Naive thymus-derived CD4-positive, alpha-beta T cell (primary cell): ENCODE measurements at regions of chr1 and their contacts with region 1.

Region 1: GRCh38 chr1:167442124-167442848 is 76.0 kb downstream of the CD247 start:
- DNase-seq: peak; percentile 79 to 89 (median 87)
- ATAC-seq: peak; percentile 90
- H3K4me3 ChIP-seq: no peak overlapping the region
- H3K4me3 Mint-ChIP-seq: peak overlapping the region; percentile 17 to 75 (median 52)
- H3K27ac ChIP-seq: peak overlapping the region; percentile 57
- H3K27ac Mint-ChIP-seq: peak overlapping the region; percentile 71 to 96 (median 92)
- H3K4me1 ChIP-seq: peaks cover 59 to 85% of the 10 kb centered on the region in 2 donors
- H3K4me1 Mint-ChIP-seq: peaks cover 51 to 99% (median 88%) of the 10 kb centered on the region in 7 donors
- H3K27me3 ChIP-seq: no peaks in the 10 kb centered on the region
- H3K27me3 Mint-ChIP-seq: no peaks in the 10 kb centered on the region

Region 2: DNA sequence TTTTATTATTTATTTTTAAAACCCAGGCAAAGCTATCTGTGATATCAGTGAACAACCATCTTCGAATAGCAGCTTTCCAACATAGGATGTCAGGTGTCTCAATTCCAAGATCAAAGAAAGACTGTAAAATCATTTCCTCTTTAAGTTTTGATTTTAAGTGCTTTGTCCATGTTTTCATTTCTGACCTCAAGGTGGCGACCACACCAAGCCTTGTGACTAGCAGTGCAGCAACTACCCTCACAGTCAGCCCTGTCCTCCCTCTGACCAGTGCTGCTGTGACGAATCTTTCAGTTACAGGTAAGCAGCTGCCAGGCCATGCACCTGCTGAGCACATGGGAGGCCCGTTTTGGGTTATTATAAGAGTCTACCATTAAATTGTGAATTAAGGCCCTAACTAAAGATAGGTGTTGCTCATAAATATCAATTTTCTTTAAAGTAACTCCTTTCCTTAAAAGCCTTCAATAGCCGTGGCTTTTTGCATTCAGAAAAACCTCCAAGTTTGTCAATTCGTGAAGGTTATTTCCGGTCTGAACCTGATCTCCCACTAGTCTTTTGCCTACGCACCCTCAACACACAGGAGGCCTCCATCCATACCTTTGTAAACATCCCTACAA is 40.9 kb before region 1 on chr1:
- CTCF ChIA-PET with region 1: interaction called, 6 read pairs
- POLR2A ChIA-PET with region 1: interaction called, 3 read pairs
- intact Hi-C with region 1: loop called (anchors 1 kb)
- DNase-seq: peak in 8 of 9 donors; percentile 28 to 55 (median 40)
- ATAC-seq: peak; percentile 75
- H3K4me3 ChIP-seq: no peak overlapping the region
- H3K4me3 Mint-ChIP-seq: no peak overlapping the region
- H3K27ac ChIP-seq: no peak overlapping the region
- H3K27ac Mint-ChIP-seq: peak overlapping the region in 2 of 9 donors; percentile 23 to 69
- H3K4me1 ChIP-seq: no peaks in the 10 kb centered on the region
- H3K4me1 Mint-ChIP-seq: peaks cover 0 to 13% (median 9%) of the 10 kb centered on the region in 7 donors
- H3K27me3 ChIP-seq: no peaks in the 10 kb centered on the region
- H3K27me3 Mint-ChIP-seq: no peaks in the 10 kb centered on the region

Region 3: DNA sequence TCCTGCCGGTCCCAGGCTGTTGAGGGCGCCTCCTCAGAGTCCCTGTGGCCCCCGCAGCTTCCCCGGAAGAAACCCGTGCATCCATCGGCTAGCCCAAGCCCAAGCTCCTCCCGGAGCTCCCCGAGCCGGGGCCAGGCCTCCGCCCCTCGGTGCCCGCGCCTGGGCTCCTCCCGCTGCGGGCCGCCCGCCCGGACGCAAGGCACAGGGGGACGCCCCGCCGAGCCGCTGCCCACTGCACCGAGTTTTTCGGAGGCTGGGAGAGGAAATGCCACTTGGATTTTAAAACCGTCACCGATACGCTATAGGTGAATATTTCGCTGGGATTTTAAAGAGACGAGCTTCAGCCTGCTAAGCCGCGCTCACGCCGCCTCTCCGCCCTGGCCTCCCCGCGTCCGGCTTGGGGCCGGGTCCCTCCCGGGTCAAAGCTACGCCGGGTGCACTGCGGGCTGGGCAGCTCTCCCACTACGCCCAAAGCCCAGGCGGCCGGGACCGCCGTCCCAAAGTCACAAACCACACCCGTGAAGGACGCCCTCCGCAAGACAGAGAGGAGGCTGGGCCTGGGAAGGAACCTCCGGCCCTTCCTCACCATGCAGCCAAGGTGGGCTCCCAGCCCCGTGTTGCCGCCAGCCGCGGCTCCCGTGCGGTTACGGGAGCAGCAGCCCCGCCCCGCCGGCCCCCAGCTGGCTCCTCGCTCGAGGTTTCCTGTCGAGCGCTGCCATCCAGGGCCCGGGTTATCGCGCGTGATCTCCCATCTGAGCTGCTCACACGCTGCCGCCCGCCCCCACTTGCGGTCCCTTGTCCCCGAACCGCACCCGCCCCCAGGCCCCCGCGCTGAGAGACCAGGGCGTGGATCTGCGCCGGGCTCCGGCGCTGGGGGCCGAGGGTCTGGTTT is 12.9 kb after region 1 on chr1:
- CTCF ChIA-PET with region 1: interaction called, 12 read pairs
- POLR2A ChIA-PET with region 1: interaction called, 51 read pairs
- intact Hi-C with region 1: loop called (anchors 1 kb)
- DNase-seq: peak; percentile 64 to 87 (median 83)
- ATAC-seq: peak; percentile 74
- H3K4me3 ChIP-seq: peak overlapping the region; percentile 91
- H3K4me3 Mint-ChIP-seq: peak overlapping the region; percentile 80 to 91 (median 87)
- H3K27ac ChIP-seq: peak overlapping the region; percentile 100
- H3K27ac Mint-ChIP-seq: peak overlapping the region; percentile 41 to 98 (median 93)
- H3K4me1 ChIP-seq: peaks cover 34 to 70% of the 10 kb centered on the region in 2 donors
- H3K4me1 Mint-ChIP-seq: peaks cover 37 to 86% (median 72%) of the 10 kb centered on the region in 7 donors
- H3K27me3 ChIP-seq: no peaks in the 10 kb centered on the region
- H3K27me3 Mint-ChIP-seq: no peaks in the 10 kb centered on the region

Region 4: DNA sequence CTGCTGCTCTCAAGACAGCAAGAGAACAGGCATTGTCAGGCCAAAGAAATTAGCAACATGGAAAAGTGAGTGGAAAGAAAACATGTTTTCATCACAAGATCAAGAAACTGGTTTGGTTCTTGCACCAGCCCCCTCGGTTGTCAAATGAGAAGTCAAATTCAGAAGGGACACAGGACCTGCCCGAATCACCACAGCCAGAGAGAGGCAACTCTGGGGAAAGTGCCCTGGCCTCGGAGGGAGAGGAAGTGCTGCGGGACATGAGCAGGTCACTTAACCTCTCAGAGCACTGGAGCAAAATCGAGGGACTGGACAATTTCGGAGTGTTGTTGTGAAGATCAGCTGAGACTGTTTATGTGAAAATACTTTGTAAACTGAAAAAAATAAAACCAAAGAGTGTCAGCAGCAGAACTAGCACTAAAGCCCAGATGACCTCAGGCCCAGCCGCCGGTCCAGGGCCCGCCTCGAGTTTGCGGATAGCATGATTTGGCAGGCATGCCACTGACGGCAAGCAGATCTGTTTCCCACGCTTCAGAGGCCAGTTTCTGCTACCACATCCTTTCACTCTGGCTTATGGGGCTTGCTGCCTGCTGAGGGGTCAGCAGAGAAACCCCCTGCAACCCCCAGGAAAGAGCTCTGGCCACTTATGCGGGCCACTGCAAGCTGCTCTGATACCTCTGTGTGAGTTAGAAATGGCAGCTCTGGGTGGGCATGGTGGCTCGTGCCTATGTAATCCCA is 44.0 kb after region 1 on chr1:
- CTCF ChIA-PET with region 1: interaction called, 6 read pairs
- POLR2A ChIA-PET with region 1: interaction called, 14 read pairs
- intact Hi-C with region 1: no loop called
- DNase-seq: no peak
- ATAC-seq: no peak
- H3K4me3 ChIP-seq: peak overlapping the region; percentile 6
- H3K4me3 Mint-ChIP-seq: peak overlapping the region; percentile 74 to 88 (median 84)
- H3K27ac ChIP-seq: peak overlapping the region; percentile 83
- H3K27ac Mint-ChIP-seq: peak overlapping the region; percentile 84 to 99 (median 98)
- H3K4me1 ChIP-seq: peaks cover 65 to 93% of the 10 kb centered on the region in 2 donors
- H3K4me1 Mint-ChIP-seq: peaks cover 63 to 100% (median 97%) of the 10 kb centered on the region in 7 donors
- H3K27me3 ChIP-seq: no peaks in the 10 kb centered on the region
- H3K27me3 Mint-ChIP-seq: no peaks in the 10 kb centered on the region

Region 5: DNA sequence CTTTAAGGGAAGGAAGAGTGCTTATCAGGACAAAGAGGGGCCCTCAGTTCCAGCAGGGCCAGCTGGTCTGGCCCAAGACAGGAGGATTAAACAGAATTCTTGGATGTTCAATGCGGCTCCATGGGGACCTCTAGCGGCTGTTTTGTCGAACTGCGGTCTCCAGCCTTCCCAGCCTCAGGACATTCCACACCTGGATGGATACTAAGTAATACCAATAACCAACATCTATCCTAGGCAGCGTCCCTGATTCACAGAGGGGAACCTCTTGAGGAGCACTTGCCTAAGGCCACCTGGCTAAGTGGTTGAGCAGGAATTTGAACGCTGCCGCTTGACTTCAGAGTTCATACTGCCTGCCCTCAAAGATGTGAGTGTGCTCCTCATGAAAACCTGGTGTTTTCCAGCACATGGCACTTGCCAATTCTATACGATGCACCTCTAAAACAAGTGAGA is 91.6 kb after region 1 on chr1:
- CTCF ChIA-PET with region 1: interaction called, 19 read pairs
- POLR2A ChIA-PET with region 1: interaction called, 5 read pairs
- intact Hi-C with region 1: loop called in 1 of 2 experiments (anchors 1 kb)
- DNase-seq: peak in 8 of 9 donors; percentile 50 to 72 (median 58)
- ATAC-seq: peak; percentile 87
- H3K4me3 ChIP-seq: no peak overlapping the region
- H3K4me3 Mint-ChIP-seq: no peak overlapping the region
- H3K27ac ChIP-seq: no peak overlapping the region
- H3K27ac Mint-ChIP-seq: peak overlapping the region in 1 of 9 donors; percentile 30
- H3K4me1 ChIP-seq: no peaks in the 10 kb centered on the region
- H3K4me1 Mint-ChIP-seq: peaks cover 0 to 11% (median 2%) of the 10 kb centered on the region in 7 donors
- H3K27me3 ChIP-seq: no peaks in the 10 kb centered on the region
- H3K27me3 Mint-ChIP-seq: peaks cover 0 to 3% (median 0%) of the 10 kb centered on the region in 5 donors

Region 6: DNA sequence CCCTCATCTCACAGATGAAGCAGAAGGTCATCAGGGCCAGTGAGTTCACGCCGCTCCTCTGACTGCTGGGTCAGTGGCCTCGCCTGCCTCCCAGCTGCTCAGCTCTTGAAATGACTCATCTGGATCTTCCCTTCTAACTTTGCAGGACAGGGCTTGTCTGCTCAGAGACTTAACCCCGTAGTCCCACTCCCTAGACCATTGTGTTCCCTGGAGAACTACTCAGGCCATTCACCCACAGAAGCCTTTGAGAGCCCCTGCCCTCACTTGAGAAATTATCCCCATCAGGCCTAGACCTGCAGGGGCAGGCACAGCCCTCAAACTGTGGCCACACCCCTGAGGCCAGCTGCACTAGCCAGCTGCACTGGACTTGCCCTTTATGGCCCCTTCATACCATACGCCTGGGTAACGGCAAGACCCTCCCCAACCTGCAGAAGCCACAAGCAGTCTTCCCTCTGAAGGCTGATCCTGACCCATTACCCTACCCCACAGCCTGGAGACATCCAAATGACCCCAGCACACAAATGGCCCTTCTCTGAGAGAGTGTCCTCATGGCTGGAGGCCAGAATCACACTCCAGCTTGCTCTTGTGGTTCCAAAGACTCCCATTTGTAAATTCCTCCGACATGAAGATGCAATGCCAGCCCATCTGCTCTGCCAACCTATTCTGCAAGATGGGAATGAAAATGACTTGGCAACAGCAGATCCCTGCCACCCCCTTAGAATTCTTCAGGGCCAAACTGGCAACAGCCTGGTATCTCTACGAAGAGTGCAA is 220.9 kb after region 1 on chr1:
- CTCF ChIA-PET with region 1: no interaction called
- POLR2A ChIA-PET with region 1: no interaction called
- intact Hi-C with region 1: no loop called
- DNase-seq: no peak
- ATAC-seq: no peak
- H3K4me3 ChIP-seq: no peak overlapping the region
- H3K4me3 Mint-ChIP-seq: peak overlapping the region in 1 of 10 donors; percentile 34
- H3K27ac ChIP-seq: no peak overlapping the region
- H3K27ac Mint-ChIP-seq: peak overlapping the region in 8 of 9 donors; percentile 40 to 88 (median 81)
- H3K4me1 ChIP-seq: peaks cover 20 to 59% of the 10 kb centered on the region in 2 donors
- H3K4me1 Mint-ChIP-seq: peaks cover 69 to 98% (median 91%) of the 10 kb centered on the region in 7 donors
- H3K27me3 ChIP-seq: no peaks in the 10 kb centered on the region
- H3K27me3 Mint-ChIP-seq: no peaks in the 10 kb centered on the region

Region 7: GRCh38 chr1:167752219-167752985 is 310.1 kb after region 1 on chr1:
- CTCF ChIA-PET with region 1: no interaction called
- POLR2A ChIA-PET with region 1: no interaction called
- intact Hi-C with region 1: no loop called
- DNase-seq: no peak
- ATAC-seq: no peak
- H3K4me3 ChIP-seq: no peak overlapping the region
- H3K4me3 Mint-ChIP-seq: peak overlapping the region in 4 of 10 donors; percentile 3 to 22 (median 13)
- H3K27ac ChIP-seq: no peak overlapping the region
- H3K27ac Mint-ChIP-seq: peak overlapping the region; percentile 0 to 73 (median 29)
- H3K4me1 ChIP-seq: no peaks in the 10 kb centered on the region
- H3K4me1 Mint-ChIP-seq: peaks cover 10 to 31% (median 29%) of the 10 kb centered on the region in 7 donors
- H3K27me3 ChIP-seq: no peaks in the 10 kb centered on the region
- H3K27me3 Mint-ChIP-seq: no peaks in the 10 kb centered on the region